ENCODE measurements at regions of chrX and their contacts with region 1.

Region 1: DNA sequence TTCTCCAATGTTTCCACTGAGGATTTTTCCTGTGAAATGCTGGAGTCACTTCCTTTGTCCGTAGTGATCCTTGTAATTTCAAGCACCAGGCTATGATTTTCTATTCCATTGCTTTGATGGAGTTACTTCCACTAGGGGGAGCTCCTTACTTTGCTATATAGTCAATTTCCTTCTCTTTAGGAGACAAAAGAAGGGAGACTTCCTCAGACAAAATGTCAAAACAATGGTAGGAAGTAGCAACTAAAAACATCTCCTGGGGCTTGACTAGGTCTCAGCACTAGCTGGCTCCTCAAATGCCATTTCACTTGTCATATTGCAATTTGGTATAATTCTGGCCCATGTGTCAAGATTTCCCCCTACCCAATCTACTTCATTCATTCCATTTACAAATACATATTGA is 24.1 kb downstream of the ZCCHC12 start:
- DNase-seq: peak; percentile 68
- H3K4me3 Mint-ChIP-seq: no peak overlapping the region
- H3K27ac Mint-ChIP-seq: no peak overlapping the region
- H3K4me1 Mint-ChIP-seq: no peaks in the 10 kb centered on the region
- H3K27me3 Mint-ChIP-seq: peaks cover 36% of the 10 kb centered on the region
- CTCF ChIP-seq: peak; percentile 55

Region 2: DNA sequence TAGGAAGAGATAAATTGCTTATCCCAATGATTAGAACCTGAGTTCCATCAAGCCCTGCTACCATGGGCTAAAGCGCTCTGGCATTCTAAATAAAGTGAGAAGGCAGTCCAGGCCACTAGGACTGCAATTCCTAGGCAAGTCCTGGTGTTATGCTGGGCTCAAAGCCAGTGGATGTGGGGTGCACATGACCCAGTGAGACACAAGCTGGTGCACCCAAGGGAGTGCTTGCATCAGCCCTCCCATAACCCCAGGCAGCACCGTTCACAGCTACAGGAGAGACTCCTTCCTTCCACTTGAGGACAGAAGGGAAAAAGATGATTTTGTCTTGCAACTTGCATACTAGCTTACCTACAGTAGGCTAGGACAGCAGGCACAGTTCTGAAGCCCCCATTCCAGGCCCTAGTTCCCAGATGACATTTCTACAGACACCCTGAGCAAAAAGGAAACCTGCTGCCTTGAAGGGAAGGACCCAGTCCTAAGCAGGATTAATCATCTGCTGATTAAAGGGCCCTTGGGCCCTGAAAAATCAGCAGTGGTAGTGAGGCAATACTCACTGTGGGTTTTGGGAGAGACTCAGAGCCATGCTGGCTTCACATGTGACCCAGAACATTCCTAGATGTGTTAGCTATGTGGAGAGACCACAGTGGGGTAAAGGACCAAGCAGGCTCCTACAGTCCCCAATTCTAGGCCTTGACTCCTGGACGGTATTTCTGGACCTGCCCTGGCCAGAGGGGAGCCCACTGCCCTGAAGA is 808.9 kb before region 1 on chrX:
- CTCF ChIA-PET with region 1: no interaction called
- POLR2A ChIA-PET with region 1: no interaction called
- intact Hi-C with region 1: no loop called
- DNase-seq: peak; percentile 58
- H3K4me3 Mint-ChIP-seq: no peak overlapping the region
- H3K27ac Mint-ChIP-seq: peak overlapping the region; percentile 35
- H3K4me1 Mint-ChIP-seq: no peaks in the 10 kb centered on the region
- H3K27me3 Mint-ChIP-seq: no peaks in the 10 kb centered on the region
- CTCF ChIP-seq: no peak

Region 3: GRCh38 chrX:118383120-118383519 is 464.6 kb before region 1 on chrX:
- CTCF ChIA-PET with region 1: no interaction called
- POLR2A ChIA-PET with region 1: no interaction called
- intact Hi-C with region 1: no loop called
- DNase-seq: peak; percentile 5
- H3K4me3 Mint-ChIP-seq: no peak overlapping the region
- H3K27ac Mint-ChIP-seq: no peak overlapping the region
- H3K4me1 Mint-ChIP-seq: no peaks in the 10 kb centered on the region
- H3K27me3 Mint-ChIP-seq: peaks cover 12% of the 10 kb centered on the region
- CTCF ChIP-seq: no peak

Region 4: GRCh38 chrX:119067023-119067739 is 219.5 kb after region 1 on chrX:
- CTCF ChIA-PET with region 1: interaction called, 41 read pairs
- POLR2A ChIA-PET with region 1: interaction called, 3 read pairs
- intact Hi-C with region 1: loop called (anchors 1 kb)
- DNase-seq: peak; percentile 65
- H3K4me3 Mint-ChIP-seq: no peak overlapping the region
- H3K27ac Mint-ChIP-seq: no peak overlapping the region
- H3K4me1 Mint-ChIP-seq: no peaks in the 10 kb centered on the region
- H3K27me3 Mint-ChIP-seq: peaks cover 25% of the 10 kb centered on the region
- CTCF ChIP-seq: peak; percentile 66

Region 5: GRCh38 chrX:119541188-119541587 is 693.5 kb after region 1 on chrX:
- CTCF ChIA-PET with region 1: no interaction called
- POLR2A ChIA-PET with region 1: no interaction called
- intact Hi-C with region 1: no loop called
- DNase-seq: peak; percentile 65
- H3K4me3 Mint-ChIP-seq: no peak overlapping the region
- H3K27ac Mint-ChIP-seq: no peak overlapping the region
- H3K4me1 Mint-ChIP-seq: no peaks in the 10 kb centered on the region
- H3K27me3 Mint-ChIP-seq: no peaks in the 10 kb centered on the region
- CTCF ChIP-seq: no peak

Measured in MCF 10A (cell line).